ENCODE measurements at regions of chr10 and their contacts with region 1.

Region 1: DNA sequence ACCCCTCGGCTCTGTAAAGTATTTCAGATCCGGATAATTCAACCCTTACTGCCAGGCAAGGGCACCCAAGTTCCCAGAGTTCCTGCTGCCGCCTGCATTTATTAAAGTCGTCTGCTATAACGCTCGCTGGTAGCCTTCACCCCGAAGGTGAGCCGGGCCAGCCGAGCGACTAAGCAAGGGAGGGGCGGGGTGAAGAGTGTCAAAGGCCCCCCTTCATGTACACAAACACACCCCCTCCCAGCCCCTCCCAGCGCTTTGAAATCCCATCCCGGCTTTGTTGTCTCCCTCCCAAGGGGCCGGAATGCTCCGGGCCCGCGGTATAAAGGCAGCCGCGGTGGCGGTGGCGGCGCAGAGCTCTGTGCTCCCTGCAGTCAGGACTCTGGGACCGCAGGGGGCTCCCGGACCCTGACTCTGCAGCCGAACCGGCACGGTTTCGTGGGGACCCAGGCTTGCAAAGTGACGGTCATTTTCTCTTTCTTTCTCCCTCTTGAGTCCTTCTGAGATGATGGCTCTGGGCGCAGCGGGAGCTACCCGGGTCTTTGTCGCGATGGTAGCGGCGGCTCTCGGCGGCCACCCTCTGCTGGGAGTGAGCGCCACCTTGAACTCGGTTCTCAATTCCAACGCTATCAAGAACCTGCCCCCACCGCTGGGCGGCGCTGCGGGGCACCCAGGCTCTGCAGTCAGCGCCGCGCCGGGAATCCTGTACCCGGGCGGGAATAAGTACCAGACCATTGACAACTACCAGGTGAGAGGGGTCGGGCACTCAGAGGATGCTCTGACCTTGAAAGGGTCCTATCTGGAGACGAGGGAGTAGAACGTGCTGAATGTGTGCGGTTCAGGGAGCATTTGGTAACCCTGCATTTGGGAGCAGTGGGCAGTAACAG is at the start of gene DKK1:
- DNase-seq: peak; percentile 67 to 82 (median 80)
- ATAC-seq: peak; percentile 94
- H3K4me3 ChIP-seq: no peak within 1 kb of the TSS
- H3K4me1 ChIP-seq: peaks cover 7% of the 10 kb centered on the region
- CTCF ChIP-seq: peak; percentile 83
- total RNA-seq, gene DKK1: 1.5 TPM in 1 of 3 donors, not detected in the others

Region 2: GRCh38 chr10:52488606-52489485 is 174.7 kb after region 1 on chr10:
- intact Hi-C with region 1: loop called in 1 of 2 experiments (anchors 10 kb)
- DNase-seq: peak in 1 of 3 donors; percentile 26
- ATAC-seq: no peak
- H3K4me3 ChIP-seq: no peak overlapping the region
- H3K4me1 ChIP-seq: no peaks in the 10 kb centered on the region
- CTCF ChIP-seq: peak; percentile 26

Measured in mucosa of descending colon (tissue), 3 donors.